Gastrocnemius medialis (tissue), 4 donors: ENCODE measurements at regions of chr14 and their contacts with region 1.

Region 1: GRCh38 chr14:49867831-49868723 is 15.5 kb upstream of the NEMF start:
- DNase-seq: peak; percentile 96 to 99
- ATAC-seq: peak; percentile 92 to 93
- H3K4me3 ChIP-seq: peak overlapping the region; percentile 55 to 86 (median 68)
- H3K27ac ChIP-seq: peak overlapping the region; percentile 90 to 97 (median 94)
- H3K4me1 ChIP-seq: peaks cover 6 to 11% of the 10 kb centered on the region in 2 donors
- H3K27me3 ChIP-seq: no peaks in the 10 kb centered on the region
- CTCF ChIP-seq: peak in 1 of 5 experiments; percentile 33
- POLR2A ChIP-seq: peak; percentile 70 to 84

Region 2: DNA sequence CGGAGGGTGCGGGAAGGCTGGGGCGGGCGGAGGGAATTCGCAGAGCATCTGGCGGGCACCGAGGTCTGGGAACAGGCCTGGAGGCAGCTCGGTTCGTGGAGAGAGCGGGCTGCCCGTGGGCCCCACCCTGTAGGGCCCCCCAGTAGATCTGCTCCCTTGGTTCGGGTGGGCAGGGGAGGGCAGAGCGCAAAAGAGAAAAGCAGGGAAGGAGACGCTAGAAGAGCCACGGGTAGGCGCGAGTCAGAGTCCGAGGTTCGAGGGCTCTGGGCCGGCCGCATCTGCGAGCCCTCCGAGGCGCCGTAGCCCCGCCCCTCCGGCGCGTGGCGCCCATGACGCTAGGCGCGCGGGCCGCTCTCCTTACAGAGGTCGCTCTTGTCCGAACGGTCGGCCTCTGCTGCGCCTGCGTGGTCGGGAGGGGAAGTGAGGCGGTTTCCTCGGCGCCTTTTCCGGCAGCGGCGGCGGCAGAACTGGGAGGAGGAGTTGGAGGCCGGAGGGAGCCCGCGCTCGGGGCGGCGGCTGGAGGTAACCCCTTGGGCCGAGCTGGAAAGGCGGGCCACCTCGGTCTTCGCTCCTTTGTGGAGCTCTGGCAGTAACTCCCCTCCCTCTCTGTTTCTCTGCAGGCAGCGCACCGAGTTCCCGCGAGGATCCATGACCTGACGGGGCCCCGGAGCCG is 24.7 kb after region 1 on chr14 and contains the start of gene ARF6:
- in situ Hi-C with region 1: no loop called
- intact Hi-C with region 1: loop called (anchors 1 kb)
- DNase-seq: peak; percentile 98 to 99
- ATAC-seq: peak; percentile 89 to 90
- H3K4me3 ChIP-seq: peak within 1 kb of the TSS; percentile 66 to 93 (median 89)
- H3K27ac ChIP-seq: peak within 1 kb of the TSS; percentile 96 to 100 (median 98)
- H3K4me1 ChIP-seq: peaks cover 39 to 46% of the 10 kb centered on the region in 2 donors
- H3K27me3 ChIP-seq: no peaks in the 10 kb centered on the region
- CTCF ChIP-seq: peak in 3 of 5 experiments; percentile 11 to 22 (median 20)
- POLR2A ChIP-seq: peak; percentile 98 to 99
- total RNA-seq, gene ARF6: 20.7 to 40.0 (median 30.8) TPM

Region 3: DNA sequence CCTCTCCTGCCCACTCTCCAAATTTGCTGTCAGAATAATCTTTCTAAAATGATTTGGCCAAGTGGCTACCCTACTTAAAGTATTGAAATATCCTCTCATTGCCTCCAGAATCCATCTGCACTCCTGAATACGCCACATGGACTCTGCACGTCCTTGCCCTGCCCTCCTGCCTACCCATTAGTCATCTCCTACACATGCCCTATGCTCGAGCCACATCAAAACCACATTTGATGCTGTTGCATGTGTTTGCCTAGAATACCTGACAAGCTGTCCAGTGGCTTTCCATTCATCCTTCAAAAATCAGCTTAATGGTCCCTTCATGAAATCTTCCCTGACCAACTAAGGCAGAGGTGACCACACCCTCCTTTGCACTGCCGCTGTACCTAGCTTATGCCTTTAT is 231.3 kb after region 1 on chr14:
- in situ Hi-C with region 1: loop called in 1 of 4 experiments (anchors 5 kb)
- intact Hi-C with region 1: no loop called
- DNase-seq: no peak
- ATAC-seq: no peak
- H3K4me3 ChIP-seq: no peak overlapping the region
- H3K27ac ChIP-seq: no peak overlapping the region
- H3K4me1 ChIP-seq: no peaks in the 10 kb centered on the region
- H3K27me3 ChIP-seq: no peaks in the 10 kb centered on the region
- CTCF ChIP-seq: no peak
- POLR2A ChIP-seq: no peak

Region 4: GRCh38 chr14:50116181-50116956 is 248.3 kb after region 1 on chr14 and contains the start of gene VCPKMT:
- in situ Hi-C with region 1: loop called in 2 of 4 experiments (anchors 5 to 10 kb)
- intact Hi-C with region 1: no loop called
- DNase-seq: peak; percentile 82 to 90
- ATAC-seq: peak; percentile 94 to 95
- H3K4me3 ChIP-seq: peak within 1 kb of the TSS; percentile 75 to 87 (median 82)
- H3K27ac ChIP-seq: peak within 1 kb of the TSS; percentile 86 to 92 (median 90)
- H3K4me1 ChIP-seq: peaks cover 14% of the 10 kb centered on the region in 2 donors
- H3K27me3 ChIP-seq: no peaks in the 10 kb centered on the region
- CTCF ChIP-seq: peak in 1 of 5 experiments; percentile 7
- POLR2A ChIP-seq: peak; percentile 77 to 86
- total RNA-seq, gene VCPKMT: 2.2 to 7.3 (median 4.9) TPM

Region 5: DNA sequence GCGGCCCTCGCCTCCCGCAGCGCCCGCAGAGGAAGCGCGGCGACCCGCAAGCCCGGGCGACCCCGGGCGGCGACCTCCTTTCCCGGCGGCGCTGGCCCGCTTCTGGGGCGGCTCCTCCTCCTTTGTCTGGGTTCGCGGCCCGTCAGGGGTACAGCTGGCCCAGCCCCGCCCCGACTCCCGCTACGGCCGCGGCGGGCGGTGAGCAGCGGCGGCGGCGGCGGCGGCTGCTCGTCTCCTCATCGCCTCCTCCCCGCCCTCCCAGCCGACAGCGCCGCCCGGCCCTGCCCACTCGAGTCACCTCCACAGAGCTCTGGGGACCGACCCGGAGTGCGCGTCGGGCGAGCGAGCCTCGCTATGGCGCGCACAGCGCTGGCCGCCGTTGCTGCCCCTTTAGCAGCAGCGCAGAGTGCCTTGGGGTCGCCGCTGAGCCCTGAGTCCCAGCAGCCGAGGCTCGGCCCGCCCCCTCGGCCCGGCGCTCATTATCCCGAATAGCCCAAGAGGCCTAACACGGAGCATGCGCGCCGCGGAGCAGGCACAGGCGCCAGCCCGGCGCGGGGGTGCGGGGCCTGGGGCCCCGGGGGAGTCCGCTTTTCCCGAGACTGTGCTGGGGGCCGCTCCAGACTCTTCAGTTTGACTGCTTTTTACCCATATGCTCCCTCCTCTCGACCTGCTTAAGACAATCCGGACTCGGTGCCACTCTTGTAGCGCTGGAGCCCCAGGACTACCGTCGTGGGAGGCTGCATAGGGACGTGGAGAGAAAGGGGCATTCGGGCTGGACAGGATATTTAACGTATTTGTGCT is 363.6 kb after region 1 on chr14 and contains the start of gene SOS2:
- in situ Hi-C with region 1: loop called in 2 of 4 experiments (anchors 10 kb)
- intact Hi-C with region 1: loop called (anchors 5 kb)
- DNase-seq: peak; percentile 74 to 86
- ATAC-seq: peak; percentile 79 to 84
- H3K4me3 ChIP-seq: peak within 1 kb of the TSS; percentile 74 to 98 (median 86)
- H3K27ac ChIP-seq: peak within 1 kb of the TSS; percentile 91 to 99 (median 97)
- H3K4me1 ChIP-seq: peaks cover 51 to 53% of the 10 kb centered on the region in 2 donors
- H3K27me3 ChIP-seq: no peaks in the 10 kb centered on the region
- CTCF ChIP-seq: peak in 1 of 5 experiments; percentile 33
- POLR2A ChIP-seq: peak; percentile 91 to 95
- total RNA-seq, gene SOS2: 46.5 to 81.2 (median 52.3) TPM

Region 6: GRCh38 chr14:50532502-50533240 is 664.6 kb after region 1 on chr14 and contains the start of gene MAP4K5:
- in situ Hi-C with region 1: loop called in 2 of 4 experiments (anchors 25 kb)
- intact Hi-C with region 1: loop called (anchors 10 kb)
- DNase-seq: peak; percentile 81 to 87
- ATAC-seq: peak; percentile 95
- H3K4me3 ChIP-seq: peak within 1 kb of the TSS; percentile 83 to 88 (median 85)
- H3K27ac ChIP-seq: peak within 1 kb of the TSS; percentile 86 to 95 (median 94)
- H3K4me1 ChIP-seq: peaks cover 21 to 29% of the 10 kb centered on the region in 2 donors
- H3K27me3 ChIP-seq: no peaks in the 10 kb centered on the region
- CTCF ChIP-seq: peak; percentile 85 to 96 (median 93)
- POLR2A ChIP-seq: peak; percentile 82 to 87
- total RNA-seq, gene MAP4K5: 35.3 to 63.9 (median 47.1) TPM